Activated CD8-positive, alpha-beta T cell treated with anti-CD3 and anti-CD28 coated beads, Interleukin-2, amount 10 ng/mL, durations not matched to agents 7 days and 5 days (primary cell): ENCODE measurements at regions of chr2 and their contacts with region 1.

Region 1: GRCh38 chr2:197310271-197310985 is at the start of gene ANKRD44:
- DNase-seq: peak; percentile 91
- ATAC-seq: peak; percentile 73
- H3K4me3 Mint-ChIP-seq: peak within 1 kb of the TSS; percentile 95
- H3K27ac Mint-ChIP-seq: peak within 1 kb of the TSS; percentile 95
- H3K4me1 Mint-ChIP-seq: peaks cover 57% of the 10 kb centered on the region
- H3K27me3 Mint-ChIP-seq: no peaks in the 10 kb centered on the region
- total RNA-seq, gene ANKRD44: 188 to 224 TPM

Region 2: DNA sequence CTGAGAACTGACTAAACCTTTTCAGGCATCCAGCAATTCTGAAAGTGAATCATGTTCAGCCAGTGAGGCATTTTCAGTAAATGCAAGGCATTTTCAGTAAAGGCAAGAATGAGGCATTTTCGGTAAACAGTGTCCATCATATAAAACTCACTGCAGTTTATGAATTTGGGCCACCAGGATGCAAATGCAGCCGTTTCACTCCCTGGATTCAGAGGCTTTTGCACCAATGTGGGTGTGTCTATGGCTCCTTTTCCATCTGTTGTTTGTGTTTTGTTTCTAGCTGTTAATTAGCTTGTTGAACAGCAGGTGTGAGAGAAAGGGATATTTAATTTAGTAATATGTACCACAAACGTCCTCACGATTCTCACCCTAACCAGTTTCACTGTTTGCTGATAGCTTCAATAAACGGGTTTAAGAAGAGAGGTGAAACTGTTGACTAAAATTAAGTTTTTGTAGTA is 267.7 kb before region 1 on chr2:
- CTCF ChIA-PET with region 1: no interaction called
- POLR2A ChIA-PET with region 1: no interaction called
- DNase-seq: no peak
- ATAC-seq: no peak
- H3K4me3 Mint-ChIP-seq: no peak overlapping the region
- H3K27ac Mint-ChIP-seq: no peak overlapping the region
- H3K4me1 Mint-ChIP-seq: peaks cover 3% of the 10 kb centered on the region
- H3K27me3 Mint-ChIP-seq: no peaks in the 10 kb centered on the region

Region 3: GRCh38 chr2:197198890-197199289 is 111.5 kb before region 1 on chr2:
- CTCF ChIA-PET with region 1: interaction called, 43 read pairs
- POLR2A ChIA-PET with region 1: interaction called, 72 read pairs
- DNase-seq: peak; percentile 97
- ATAC-seq: peak; percentile 82
- H3K4me3 Mint-ChIP-seq: peak overlapping the region; percentile 81
- H3K27ac Mint-ChIP-seq: peak overlapping the region; percentile 93
- H3K4me1 Mint-ChIP-seq: peaks cover 89% of the 10 kb centered on the region
- H3K27me3 Mint-ChIP-seq: no peaks in the 10 kb centered on the region

Region 4: GRCh38 chr2:197239434-197239833 is 71.0 kb before region 1 on chr2:
- CTCF ChIA-PET with region 1: interaction called, 8 read pairs
- POLR2A ChIA-PET with region 1: interaction called, 32 read pairs
- DNase-seq: no peak
- ATAC-seq: peak; percentile 57
- H3K4me3 Mint-ChIP-seq: peak overlapping the region; percentile 77
- H3K27ac Mint-ChIP-seq: peak overlapping the region; percentile 91
- H3K4me1 Mint-ChIP-seq: peaks cover 83% of the 10 kb centered on the region
- H3K27me3 Mint-ChIP-seq: no peaks in the 10 kb centered on the region

Region 5: GRCh38 chr2:197255543-197255942 is 54.9 kb before region 1 on chr2:
- CTCF ChIA-PET with region 1: interaction called, 7 read pairs
- POLR2A ChIA-PET with region 1: interaction called, 87 read pairs
- DNase-seq: peak; percentile 84
- ATAC-seq: peak; percentile 94
- H3K4me3 Mint-ChIP-seq: peak overlapping the region; percentile 77
- H3K27ac Mint-ChIP-seq: peak overlapping the region; percentile 92
- H3K4me1 Mint-ChIP-seq: peaks cover 78% of the 10 kb centered on the region
- H3K27me3 Mint-ChIP-seq: no peaks in the 10 kb centered on the region

Region 6: DNA sequence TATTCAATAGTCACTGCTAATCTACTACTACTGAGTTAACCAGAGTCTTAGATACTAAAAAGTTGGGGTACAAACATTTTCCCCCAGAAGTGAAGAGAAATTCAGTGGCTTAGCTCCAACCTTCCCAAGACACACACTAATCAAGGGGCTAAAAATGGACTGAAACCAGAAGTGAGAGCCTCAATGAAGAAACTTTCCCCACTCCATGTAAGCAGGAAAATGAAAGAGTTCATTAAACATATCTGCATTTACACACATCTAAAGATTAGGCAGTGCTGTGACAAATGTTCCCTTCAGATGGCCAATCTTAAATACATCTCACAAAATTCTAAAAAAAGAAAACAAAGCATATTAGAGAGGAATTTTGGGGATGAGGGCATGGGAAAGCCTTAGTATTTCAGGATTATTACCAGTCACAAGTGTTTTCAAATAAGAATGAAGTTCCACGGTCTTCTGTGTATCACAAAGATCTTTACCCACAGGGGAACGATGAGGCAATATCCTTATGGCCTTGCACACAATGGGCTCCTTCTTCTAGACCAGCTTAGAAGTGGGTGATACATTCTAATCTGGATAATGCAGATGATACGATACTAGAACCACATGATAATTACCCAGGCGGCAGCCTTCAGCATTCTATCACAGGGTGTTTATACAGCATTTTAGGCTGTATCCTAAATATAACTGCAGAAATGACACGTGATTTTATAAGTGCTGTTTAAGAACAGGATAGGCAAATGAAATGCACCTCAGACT is 17.0 kb before region 1 on chr2:
- CTCF ChIA-PET with region 1: interaction called, 78 read pairs
- POLR2A ChIA-PET with region 1: interaction called, 226 read pairs
- DNase-seq: peak; percentile 55
- ATAC-seq: peak; percentile 69
- H3K4me3 Mint-ChIP-seq: peak overlapping the region; percentile 71
- H3K27ac Mint-ChIP-seq: peak overlapping the region; percentile 93
- H3K4me1 Mint-ChIP-seq: peaks cover 87% of the 10 kb centered on the region
- H3K27me3 Mint-ChIP-seq: no peaks in the 10 kb centered on the region

Region 7: DNA sequence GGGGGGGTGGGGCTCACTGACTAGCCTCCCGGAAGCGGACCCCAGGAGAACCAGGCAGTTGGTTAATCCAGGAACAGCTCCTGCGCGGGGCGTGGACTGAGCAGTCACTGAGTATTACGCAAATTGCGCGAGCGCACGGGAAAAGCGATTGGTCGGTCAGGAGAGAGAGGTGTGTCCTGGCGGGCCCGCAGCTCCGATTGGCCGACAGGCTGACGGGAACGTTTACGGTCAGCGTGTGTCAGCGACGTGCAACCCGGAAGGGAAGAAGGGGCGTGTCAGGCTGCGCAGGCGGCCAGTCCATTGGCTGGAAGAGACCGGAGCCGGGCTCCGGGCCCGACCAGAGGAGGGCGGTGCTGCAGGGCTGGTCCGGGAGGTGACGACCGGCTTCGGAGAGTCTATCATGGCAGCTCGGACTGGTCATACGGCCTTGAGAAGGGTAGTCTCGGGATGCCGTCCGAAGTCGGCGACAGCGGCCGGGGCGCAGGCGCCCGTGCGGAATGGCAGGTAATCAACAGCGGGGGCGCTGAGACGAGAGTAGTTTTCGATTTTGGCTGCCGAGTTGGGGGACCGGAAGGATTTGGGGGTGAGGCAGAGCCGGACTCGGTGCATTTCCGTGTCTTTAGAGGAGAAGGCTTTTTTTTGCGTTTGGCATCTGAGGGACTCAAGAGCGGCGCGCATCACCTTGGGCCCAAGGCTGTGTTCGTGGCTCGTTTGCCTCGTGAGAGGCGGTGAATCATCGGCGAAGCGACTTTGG is 142.9 kb after region 1 on chr2 and contains the start of gene COQ10B:
- CTCF ChIA-PET with region 1: no interaction called
- POLR2A ChIA-PET with region 1: no interaction called
- DNase-seq: peak; percentile 99
- ATAC-seq: peak; percentile 95
- H3K4me3 Mint-ChIP-seq: peak within 1 kb of the TSS; percentile 96
- H3K27ac Mint-ChIP-seq: peak within 1 kb of the TSS; percentile 100
- H3K4me1 Mint-ChIP-seq: peaks cover 38% of the 10 kb centered on the region
- H3K27me3 Mint-ChIP-seq: no peaks in the 10 kb centered on the region
- total RNA-seq, gene COQ10B: 22.5 to 22.6 TPM

Region 8: DNA sequence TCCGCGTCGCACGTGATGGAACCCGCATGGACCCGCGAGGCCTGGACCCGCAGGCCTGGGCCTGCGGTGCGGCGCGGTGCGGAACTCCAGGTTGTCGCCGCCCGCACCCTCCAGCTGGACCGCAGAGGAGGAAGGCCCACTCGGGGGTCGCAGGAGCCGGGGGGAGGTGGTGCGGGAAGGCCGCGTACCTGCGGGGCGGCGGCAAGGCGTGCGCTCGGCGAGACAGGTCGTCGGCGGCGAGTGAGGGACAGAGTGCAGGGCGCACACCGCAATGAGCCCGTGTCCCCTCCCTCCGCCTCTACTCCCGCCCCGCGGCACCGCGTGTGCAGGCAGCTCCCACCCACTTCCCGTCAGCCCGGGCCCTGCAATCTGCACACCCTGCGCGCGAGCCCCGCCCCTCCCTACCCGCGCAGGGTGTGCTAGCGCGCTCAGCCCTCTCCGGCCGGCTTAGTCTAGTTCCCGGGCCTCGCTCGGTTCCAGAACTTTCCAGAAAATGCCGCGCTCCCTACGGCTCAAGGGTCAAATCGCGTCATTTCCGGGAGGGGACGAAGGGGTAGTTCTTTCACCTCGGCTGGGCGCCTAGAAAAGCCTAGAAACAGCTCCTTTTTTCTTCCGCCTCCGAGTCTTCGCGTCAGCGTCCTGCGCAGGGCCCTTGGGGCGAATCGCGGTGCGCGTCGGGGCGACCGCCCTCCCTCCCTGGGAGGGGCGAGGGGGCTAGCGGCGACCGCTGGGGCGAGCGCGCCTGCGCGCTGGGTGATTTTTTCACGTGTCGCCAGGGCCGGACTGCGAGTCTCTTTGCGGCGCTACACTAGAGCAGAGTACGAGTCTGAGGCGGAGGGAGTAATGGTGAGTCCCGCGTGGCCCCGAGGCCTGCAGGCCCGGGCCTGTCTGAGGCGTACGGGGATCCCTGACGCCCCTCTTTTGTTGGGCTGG is 189.4 kb after region 1 on chr2 and contains the starts of genes HSPD1 and HSPE1:
- CTCF ChIA-PET with region 1: no interaction called
- POLR2A ChIA-PET with region 1: no interaction called
- DNase-seq: peak; percentile 99
- ATAC-seq: peak; percentile 86
- H3K4me3 Mint-ChIP-seq: peak within 1 kb of the TSS; percentile 98
- H3K27ac Mint-ChIP-seq: peak within 1 kb of the TSS; percentile 98
- H3K4me1 Mint-ChIP-seq: peaks cover 52% of the 10 kb centered on the region
- H3K27me3 Mint-ChIP-seq: no peaks in the 10 kb centered on the region
- total RNA-seq, gene HSPD1: 322 to 336 TPM
- total RNA-seq, gene HSPE1: 153 to 162 TPM